Caco-2 (cell line): ENCODE measurements at regions of chrX and their contacts with region 1.

Region 1: DNA sequence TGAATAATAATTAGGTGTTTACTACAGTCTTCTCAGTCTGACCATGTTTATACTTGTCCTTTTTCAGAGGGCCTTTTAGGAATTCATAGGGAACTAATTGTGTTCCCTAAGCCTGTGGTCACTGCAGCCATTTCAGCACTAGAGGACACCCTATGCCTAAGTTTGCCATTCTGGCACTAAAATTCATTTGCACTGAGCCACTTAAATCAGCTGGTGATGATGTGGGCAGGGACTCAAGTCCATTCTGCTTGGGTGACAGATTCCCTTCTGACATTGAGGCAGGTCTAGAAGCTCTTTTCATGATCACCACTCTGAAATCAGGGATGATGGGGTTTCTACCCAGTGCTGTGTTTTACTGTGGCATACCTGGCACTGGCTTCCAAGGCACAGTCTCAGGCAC is 1178.9 kb upstream of the DIAPH2 start:
- DNase-seq: peak; percentile 29 to 36
- H3K4me3 ChIP-seq: no peak overlapping the region
- H3K4me3 Mint-ChIP-seq: no peak overlapping the region
- H3K27ac Mint-ChIP-seq: no peak overlapping the region
- H3K4me1 ChIP-seq: no peaks in the 10 kb centered on the region
- H3K4me1 Mint-ChIP-seq: no peaks in the 10 kb centered on the region
- H3K27me3 ChIP-seq: no peaks in the 10 kb centered on the region
- H3K27me3 Mint-ChIP-seq: no peaks in the 10 kb centered on the region
- CTCF ChIP-seq: peak; percentile 30 to 57

Region 2: DNA sequence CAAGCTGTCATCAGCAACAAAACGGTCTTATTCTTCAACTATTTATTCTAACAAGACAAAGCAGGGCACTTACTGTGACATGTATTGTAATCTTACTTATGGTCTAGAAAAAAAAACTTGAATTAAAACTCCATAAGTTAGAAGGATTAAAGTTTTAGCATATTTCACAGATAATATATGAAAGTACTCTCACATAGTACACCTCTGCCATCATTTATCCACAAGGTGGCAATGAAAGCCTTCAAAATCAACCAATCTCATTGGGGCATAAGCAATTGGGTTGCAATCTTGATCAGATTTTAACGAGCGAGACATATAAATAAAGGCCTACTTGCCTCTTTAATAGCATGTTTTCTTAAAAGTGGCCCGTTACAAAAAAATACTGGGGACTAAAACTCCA is 448.8 kb before region 1 on chrX:
- CTCF ChIA-PET with region 1: no interaction called
- POLR2A ChIA-PET with region 1: no interaction called
- intact Hi-C with region 1: no loop called
- DNase-seq: no peak
- H3K4me3 ChIP-seq: no peak overlapping the region
- H3K4me3 Mint-ChIP-seq: no peak overlapping the region
- H3K27ac Mint-ChIP-seq: no peak overlapping the region
- H3K4me1 ChIP-seq: no peaks in the 10 kb centered on the region
- H3K4me1 Mint-ChIP-seq: no peaks in the 10 kb centered on the region
- H3K27me3 ChIP-seq: no peaks in the 10 kb centered on the region
- H3K27me3 Mint-ChIP-seq: no peaks in the 10 kb centered on the region
- CTCF ChIP-seq: no peak

Region 3: GRCh38 chrX:95332530-95332929 is 173.2 kb before region 1 on chrX:
- CTCF ChIA-PET with region 1: no interaction called
- POLR2A ChIA-PET with region 1: no interaction called
- intact Hi-C with region 1: no loop called
- DNase-seq: no peak
- H3K4me3 ChIP-seq: no peak overlapping the region
- H3K4me3 Mint-ChIP-seq: no peak overlapping the region
- H3K27ac Mint-ChIP-seq: no peak overlapping the region
- H3K4me1 ChIP-seq: no peaks in the 10 kb centered on the region
- H3K4me1 Mint-ChIP-seq: no peaks in the 10 kb centered on the region
- H3K27me3 ChIP-seq: no peaks in the 10 kb centered on the region
- H3K27me3 Mint-ChIP-seq: no peaks in the 10 kb centered on the region
- CTCF ChIP-seq: no peak

Region 4: GRCh38 chrX:95346856-95347255 is 158.9 kb before region 1 on chrX:
- CTCF ChIA-PET with region 1: no interaction called
- POLR2A ChIA-PET with region 1: no interaction called
- intact Hi-C with region 1: loop called (anchors 10 kb)
- DNase-seq: no peak
- H3K4me3 ChIP-seq: no peak overlapping the region
- H3K4me3 Mint-ChIP-seq: no peak overlapping the region
- H3K27ac Mint-ChIP-seq: no peak overlapping the region
- H3K4me1 ChIP-seq: no peaks in the 10 kb centered on the region
- H3K4me1 Mint-ChIP-seq: no peaks in the 10 kb centered on the region
- H3K27me3 ChIP-seq: no peaks in the 10 kb centered on the region
- H3K27me3 Mint-ChIP-seq: peaks cover 2% of the 10 kb centered on the region
- CTCF ChIP-seq: peak in 1 of 2 experiments; percentile 13

Region 5: GRCh38 chrX:95539041-95539440 is 33.3 kb after region 1 on chrX:
- CTCF ChIA-PET with region 1: no interaction called
- POLR2A ChIA-PET with region 1: no interaction called
- intact Hi-C with region 1: no loop called
- DNase-seq: no peak
- H3K4me3 ChIP-seq: no peak overlapping the region
- H3K4me3 Mint-ChIP-seq: no peak overlapping the region
- H3K27ac Mint-ChIP-seq: no peak overlapping the region
- H3K4me1 ChIP-seq: no peaks in the 10 kb centered on the region
- H3K4me1 Mint-ChIP-seq: no peaks in the 10 kb centered on the region
- H3K27me3 ChIP-seq: no peaks in the 10 kb centered on the region
- H3K27me3 Mint-ChIP-seq: no peaks in the 10 kb centered on the region
- CTCF ChIP-seq: no peak

Region 6: DNA sequence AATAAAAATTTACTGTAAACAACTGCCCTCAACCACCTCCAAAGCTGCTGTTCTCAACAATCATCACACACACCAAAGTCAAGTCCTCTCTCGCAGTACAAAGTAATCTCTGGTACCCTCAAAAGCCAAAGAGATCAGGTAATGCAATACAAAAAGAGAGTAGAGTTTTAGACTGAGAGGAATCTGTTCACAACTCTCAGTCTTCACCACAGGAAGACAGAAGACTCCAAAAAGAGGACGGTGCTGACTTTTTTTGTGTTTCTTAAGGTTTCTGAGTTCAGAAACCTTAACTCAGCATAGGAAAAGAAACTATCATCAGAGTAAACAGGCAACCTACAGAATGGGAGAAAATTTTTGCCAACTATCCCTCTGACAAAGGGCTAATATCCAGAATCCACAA is 106.6 kb after region 1 on chrX:
- CTCF ChIA-PET with region 1: no interaction called
- POLR2A ChIA-PET with region 1: no interaction called
- intact Hi-C with region 1: no loop called
- DNase-seq: no peak
- H3K4me3 ChIP-seq: no peak overlapping the region
- H3K4me3 Mint-ChIP-seq: no peak overlapping the region
- H3K27ac Mint-ChIP-seq: no peak overlapping the region
- H3K4me1 ChIP-seq: no peaks in the 10 kb centered on the region
- H3K4me1 Mint-ChIP-seq: no peaks in the 10 kb centered on the region
- H3K27me3 ChIP-seq: no peaks in the 10 kb centered on the region
- H3K27me3 Mint-ChIP-seq: no peaks in the 10 kb centered on the region
- CTCF ChIP-seq: no peak

Region 7: DNA sequence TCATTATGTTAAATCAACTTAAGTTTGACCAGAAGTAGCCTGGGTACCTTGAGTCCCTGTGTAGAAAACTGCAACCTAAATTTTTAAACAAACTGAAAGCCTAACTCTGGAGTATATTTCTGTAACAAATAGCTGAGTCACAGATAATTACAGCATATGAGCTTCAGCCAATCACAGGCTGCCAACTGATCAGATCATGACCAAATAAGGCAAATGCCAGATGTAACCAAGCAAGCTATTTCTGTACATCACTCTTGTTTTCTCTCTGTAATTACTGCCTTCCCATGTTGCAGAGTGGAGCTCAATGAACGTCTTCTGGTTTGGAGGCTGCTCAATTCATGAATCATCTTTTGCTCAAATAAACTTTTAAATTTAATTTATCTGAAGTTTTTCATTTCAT is 198.0 kb after region 1 on chrX:
- CTCF ChIA-PET with region 1: no interaction called
- POLR2A ChIA-PET with region 1: no interaction called
- intact Hi-C with region 1: loop called (anchors 1 kb)
- DNase-seq: no peak
- H3K4me3 ChIP-seq: no peak overlapping the region
- H3K4me3 Mint-ChIP-seq: no peak overlapping the region
- H3K27ac Mint-ChIP-seq: no peak overlapping the region
- H3K4me1 ChIP-seq: no peaks in the 10 kb centered on the region
- H3K4me1 Mint-ChIP-seq: no peaks in the 10 kb centered on the region
- H3K27me3 ChIP-seq: no peaks in the 10 kb centered on the region
- H3K27me3 Mint-ChIP-seq: peaks cover 3% of the 10 kb centered on the region
- CTCF ChIP-seq: no peak

Region 8: GRCh38 chrX:95764972-95765451 is 259.3 kb after region 1 on chrX:
- CTCF ChIA-PET with region 1: no interaction called
- POLR2A ChIA-PET with region 1: no interaction called
- intact Hi-C with region 1: loop called (anchors 1 kb)
- DNase-seq: peak in 1 of 2 experiments; percentile 7
- H3K4me3 ChIP-seq: no peak overlapping the region
- H3K4me3 Mint-ChIP-seq: no peak overlapping the region
- H3K27ac Mint-ChIP-seq: no peak overlapping the region
- H3K4me1 ChIP-seq: no peaks in the 10 kb centered on the region
- H3K4me1 Mint-ChIP-seq: no peaks in the 10 kb centered on the region
- H3K27me3 ChIP-seq: no peaks in the 10 kb centered on the region
- H3K27me3 Mint-ChIP-seq: no peaks in the 10 kb centered on the region
- CTCF ChIP-seq: peak; percentile 42 to 43

Region 9: DNA sequence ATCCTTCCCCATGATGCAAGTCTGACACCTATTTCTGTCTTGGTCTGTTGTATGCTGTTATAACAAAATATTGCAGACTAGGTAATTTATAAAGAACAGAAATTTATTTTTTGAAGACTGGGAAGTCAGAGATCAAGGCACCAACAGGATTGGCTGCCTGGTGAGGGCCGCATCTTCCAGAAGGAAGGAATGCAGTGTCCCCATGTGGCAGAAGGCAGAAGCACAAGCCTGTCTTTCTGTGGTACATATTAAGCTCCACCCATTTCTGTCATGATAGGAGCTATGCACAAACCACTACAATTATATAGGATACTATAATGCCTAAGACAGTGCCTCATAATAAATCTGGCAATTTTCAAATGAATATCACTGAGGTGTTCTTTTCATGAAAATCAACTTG is 676.6 kb after region 1 on chrX:
- CTCF ChIA-PET with region 1: interaction called, 3 read pairs
- POLR2A ChIA-PET with region 1: no interaction called
- intact Hi-C with region 1: loop called (anchors 1 kb)
- DNase-seq: peak; percentile 36 to 55
- H3K4me3 ChIP-seq: no peak overlapping the region
- H3K4me3 Mint-ChIP-seq: no peak overlapping the region
- H3K27ac Mint-ChIP-seq: no peak overlapping the region
- H3K4me1 ChIP-seq: no peaks in the 10 kb centered on the region
- H3K4me1 Mint-ChIP-seq: no peaks in the 10 kb centered on the region
- H3K27me3 ChIP-seq: no peaks in the 10 kb centered on the region
- H3K27me3 Mint-ChIP-seq: no peaks in the 10 kb centered on the region
- CTCF ChIP-seq: peak; percentile 27 to 58